GM12878 (cell line): ENCODE measurements at regions of chr3 and their contacts with region 1.

Region 1: GRCh38 chr3:46488735-46489361 is 8.9 kb upstream of the RTP3 start:
- DNase-seq: peak; percentile 56
- ATAC-seq: peak; percentile 99
- H3K4me3 ChIP-seq: no peak overlapping the region
- H3K27ac ChIP-seq: no peak overlapping the region
- H3K4me1 ChIP-seq: peaks cover 5% of the 10 kb centered on the region
- H3K27me3 ChIP-seq: peaks cover 0 to 2% of the 10 kb centered on the region in 2 experiments; a peak in 1 of 4 replicates
- CTCF ChIP-seq: peak; percentile 100; a peak in 5 of 6 replicates
- EP300 ChIP-seq: peak in 1 of 2 experiments; percentile 60; a peak in 1 of 4 replicates
- POLR2A ChIP-seq: no peak
- RAD21 ChIP-seq: peak; percentile 100

Region 2: GRCh38 chr3:45199837-45200648 is 1288.8 kb before region 1 on chr3:
- CTCF ChIA-PET with region 1: no interaction called
- POLR2A ChIA-PET with region 1: no interaction called
- RAD21 ChIA-PET with region 1: no interaction called
- SMC1A ChIA-PET with region 1: no interaction called
- in situ Hi-C with region 1: no loop called
- intact Hi-C with region 1: no loop called
- DNase-seq: no peak
- ATAC-seq: no peak
- H3K4me3 ChIP-seq: no peak overlapping the region
- H3K27ac ChIP-seq: no peak overlapping the region
- H3K4me1 ChIP-seq: no peaks in the 10 kb centered on the region
- H3K27me3 ChIP-seq: peaks cover 0 to 2% of the 10 kb centered on the region in 2 experiments; a peak in 3 of 4 replicates
- CTCF ChIP-seq: no peak
- EP300 ChIP-seq: no peak
- POLR2A ChIP-seq: no peak
- RAD21 ChIP-seq: no peak

Region 3: GRCh38 chr3:46146548-46146947 is 342.3 kb before region 1 on chr3:
- CTCF ChIA-PET with region 1: no interaction called
- POLR2A ChIA-PET with region 1: no interaction called
- RAD21 ChIA-PET with region 1: no interaction called
- SMC1A ChIA-PET with region 1: no interaction called
- in situ Hi-C with region 1: no loop called
- intact Hi-C with region 1: no loop called
- DNase-seq: no peak
- ATAC-seq: no peak
- H3K4me3 ChIP-seq: no peak overlapping the region
- H3K27ac ChIP-seq: no peak overlapping the region
- H3K4me1 ChIP-seq: no peaks in the 10 kb centered on the region
- H3K27me3 ChIP-seq: no peaks in the 10 kb centered on the region
- CTCF ChIP-seq: no peak
- EP300 ChIP-seq: no peak
- POLR2A ChIP-seq: no peak
- RAD21 ChIP-seq: no peak

Region 4: DNA sequence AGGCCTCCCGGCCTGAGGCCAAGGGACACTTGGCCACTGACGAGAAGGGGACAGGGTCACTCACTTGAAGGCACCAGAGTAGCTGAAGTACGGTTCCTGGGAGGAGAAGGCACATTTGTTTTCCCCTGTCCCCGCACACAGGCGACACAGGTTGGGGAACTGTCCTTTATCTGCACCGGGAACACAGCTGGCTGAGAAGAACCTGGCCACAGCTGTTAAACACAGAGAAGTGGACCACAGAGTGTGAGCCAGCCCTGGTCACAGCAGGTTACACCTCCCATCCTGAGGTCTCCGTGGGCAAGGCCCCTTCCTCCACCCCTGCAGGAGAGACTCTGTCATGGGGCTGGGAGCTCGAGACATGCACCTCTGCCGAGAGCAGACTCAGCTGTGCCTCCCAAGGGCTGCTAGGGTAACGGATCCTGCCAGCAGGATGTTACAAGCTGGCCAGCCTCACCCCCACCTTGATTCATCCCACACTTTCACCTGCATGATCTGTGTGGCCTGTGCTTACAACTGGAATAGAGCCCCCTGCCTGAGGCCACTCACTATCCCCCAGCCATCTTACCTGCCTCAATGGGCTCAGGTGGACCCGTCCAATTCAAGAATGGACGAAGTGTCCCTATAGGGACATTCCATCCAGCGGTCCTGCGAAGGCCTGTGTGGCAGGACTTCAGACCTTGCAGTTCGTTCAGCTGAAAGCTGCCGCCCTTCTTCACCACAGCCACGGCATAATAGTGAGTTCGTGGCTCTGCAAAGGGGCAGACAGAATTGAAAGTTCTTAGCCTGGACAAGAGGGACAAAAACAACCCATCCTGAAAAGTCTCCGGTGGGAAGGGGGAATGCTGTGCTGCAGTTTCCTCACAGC is 33.4 kb before region 1 on chr3:
- CTCF ChIA-PET with region 1: interaction called, 10 read pairs
- POLR2A ChIA-PET with region 1: no interaction called
- RAD21 ChIA-PET with region 1: interaction called, 5 read pairs
- SMC1A ChIA-PET with region 1: no interaction called
- in situ Hi-C with region 1: no loop called
- intact Hi-C with region 1: no loop called
- DNase-seq: no peak
- ATAC-seq: no peak
- H3K4me3 ChIP-seq: no peak overlapping the region
- H3K27ac ChIP-seq: no peak overlapping the region
- H3K4me1 ChIP-seq: no peaks in the 10 kb centered on the region
- H3K27me3 ChIP-seq: peaks cover 1 to 4% of the 10 kb centered on the region in 2 experiments; a peak in 2 of 4 replicates
- CTCF ChIP-seq: no peak
- EP300 ChIP-seq: no peak
- POLR2A ChIP-seq: no peak
- RAD21 ChIP-seq: no peak

Region 5: DNA sequence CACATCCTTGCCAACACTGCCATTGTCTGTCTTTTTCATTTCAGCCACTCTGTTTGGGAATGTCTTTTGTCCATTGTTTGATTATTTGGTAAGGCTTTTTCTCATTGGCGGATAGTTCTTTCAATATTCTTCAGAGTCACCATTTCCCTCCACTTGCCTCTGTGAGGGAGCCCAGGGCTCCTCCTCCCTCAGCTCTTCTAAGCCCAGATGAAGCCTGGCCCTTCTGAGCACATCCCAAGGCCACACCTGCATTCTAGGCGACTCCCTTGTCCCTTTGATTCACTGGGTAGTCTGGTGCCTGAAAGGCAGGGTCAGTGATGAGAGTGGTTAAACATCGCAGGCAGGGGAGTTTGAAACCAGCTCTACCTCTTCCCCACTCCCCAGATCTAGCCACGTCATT is 11.7 kb before region 1 on chr3:
- CTCF ChIA-PET with region 1: interaction called, 19 read pairs
- POLR2A ChIA-PET with region 1: no interaction called
- RAD21 ChIA-PET with region 1: interaction called, 5 read pairs
- SMC1A ChIA-PET with region 1: interaction called, 10 read pairs
- in situ Hi-C with region 1: no loop called
- intact Hi-C with region 1: no loop called
- DNase-seq: no peak
- ATAC-seq: no peak
- H3K4me3 ChIP-seq: no peak overlapping the region
- H3K27ac ChIP-seq: no peak overlapping the region
- H3K4me1 ChIP-seq: no peaks in the 10 kb centered on the region
- H3K27me3 ChIP-seq: peaks cover 0 to 6% of the 10 kb centered on the region in 2 experiments; a peak in 2 of 4 replicates
- CTCF ChIP-seq: no peak
- EP300 ChIP-seq: no peak
- POLR2A ChIP-seq: no peak
- RAD21 ChIP-seq: no peak

Region 6: DNA sequence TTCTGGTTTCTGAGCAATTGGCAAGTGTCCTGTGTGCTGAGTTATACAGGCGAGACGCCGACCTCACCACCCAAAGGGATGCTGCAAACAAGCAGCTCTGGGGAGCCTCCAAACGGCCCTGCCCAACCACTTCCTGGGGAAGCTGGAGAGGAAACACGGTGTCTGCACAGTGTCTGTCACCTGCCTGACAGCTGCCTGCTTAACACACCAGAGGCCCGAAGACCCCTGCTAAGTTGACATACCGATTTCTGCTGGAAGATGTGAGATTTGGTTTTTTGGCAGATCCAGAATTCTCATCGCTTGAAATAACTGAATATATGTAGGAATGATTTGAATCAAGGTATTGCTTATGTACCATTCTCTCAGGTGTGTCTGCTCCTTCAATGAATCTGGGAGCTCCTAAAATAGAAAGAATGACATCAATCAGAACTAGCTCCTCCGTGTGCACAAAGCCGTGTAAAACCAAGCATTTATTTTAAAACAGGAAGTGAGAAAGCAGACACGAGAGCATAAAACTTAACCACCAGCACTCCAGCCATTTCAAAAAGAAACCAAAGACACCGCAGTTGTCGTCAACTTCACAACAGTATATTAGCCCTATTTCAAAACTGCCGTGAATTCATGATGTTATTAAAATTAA is 50.1 kb after region 1 on chr3:
- CTCF ChIA-PET with region 1: interaction called, 25 read pairs
- POLR2A ChIA-PET with region 1: no interaction called
- RAD21 ChIA-PET with region 1: interaction called, 6 read pairs
- SMC1A ChIA-PET with region 1: interaction called, 12 read pairs
- in situ Hi-C with region 1: no loop called
- intact Hi-C with region 1: no loop called
- DNase-seq: peak; percentile 97
- ATAC-seq: peak; percentile 92
- H3K4me3 ChIP-seq: peak overlapping the region; percentile 57; the same call in 1 of the 2 replicates
- H3K27ac ChIP-seq: peak overlapping the region; percentile 90
- H3K4me1 ChIP-seq: peaks cover 39% of the 10 kb centered on the region
- H3K27me3 ChIP-seq: no peaks in the 10 kb centered on the region
- CTCF ChIP-seq: no peak
- EP300 ChIP-seq: peak; percentile 99
- POLR2A ChIP-seq: no peak
- RAD21 ChIP-seq: 0 out of 2 replicates have a peak, but pooled peaks have one; percentile 6

Region 7: DNA sequence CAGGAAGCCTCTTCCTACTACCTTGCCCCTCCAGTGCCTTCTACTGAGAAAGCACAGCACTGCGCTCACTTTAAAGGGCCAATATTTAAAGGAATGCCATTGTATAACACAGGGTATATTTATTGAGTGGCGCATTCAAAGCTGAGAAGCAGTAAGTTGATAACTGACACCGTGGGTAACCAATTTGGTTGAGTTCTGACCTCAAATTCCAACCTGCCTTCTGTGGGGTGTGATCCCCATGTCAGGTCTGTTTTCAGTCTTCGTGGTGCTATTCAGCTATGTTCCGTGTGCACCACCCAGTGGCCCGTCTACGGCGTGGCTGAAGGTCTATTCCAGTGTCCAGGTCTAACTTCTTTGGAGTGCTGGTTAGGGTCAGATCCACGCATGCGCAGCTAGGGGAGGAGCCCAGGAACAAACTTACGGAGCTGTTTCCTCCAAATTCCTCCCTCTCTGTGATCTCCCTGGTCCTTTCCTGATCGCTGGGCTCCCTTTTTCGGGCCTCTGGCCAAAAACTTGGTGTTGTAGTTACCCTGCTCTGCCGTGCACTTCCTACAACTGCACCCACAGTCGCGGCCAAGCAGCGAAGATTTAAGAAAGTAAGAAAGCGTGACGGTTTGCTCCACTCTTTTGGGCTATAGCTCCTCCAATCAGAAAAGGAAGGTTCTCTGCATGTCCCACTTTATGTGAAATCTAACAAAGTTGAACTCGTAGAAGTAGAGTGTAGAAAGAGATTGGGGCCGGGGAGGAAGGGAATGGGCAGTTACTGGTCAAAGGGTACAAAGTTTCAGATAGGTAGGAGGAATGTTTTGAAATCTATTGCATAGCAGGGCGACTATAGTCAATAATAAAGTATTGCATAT is 69.6 kb after region 1 on chr3:
- CTCF ChIA-PET with region 1: interaction called, 111 read pairs
- POLR2A ChIA-PET with region 1: interaction called, 3 read pairs
- RAD21 ChIA-PET with region 1: interaction called, 35 read pairs
- SMC1A ChIA-PET with region 1: interaction called, 23 read pairs
- in situ Hi-C with region 1: loop called (anchors 5 kb)
- intact Hi-C with region 1: loop called (anchors 1 kb)
- DNase-seq: peak; percentile 75
- ATAC-seq: peak; percentile 100
- H3K4me3 ChIP-seq: peak overlapping the region; percentile 66
- H3K27ac ChIP-seq: no peak overlapping the region
- H3K4me1 ChIP-seq: no peaks in the 10 kb centered on the region
- H3K27me3 ChIP-seq: no peaks in the 10 kb centered on the region
- CTCF ChIP-seq: peak; percentile 88 to 95 (median 88)
- EP300 ChIP-seq: no peak
- POLR2A ChIP-seq: no peak
- RAD21 ChIP-seq: peak; percentile 97

Region 8: DNA sequence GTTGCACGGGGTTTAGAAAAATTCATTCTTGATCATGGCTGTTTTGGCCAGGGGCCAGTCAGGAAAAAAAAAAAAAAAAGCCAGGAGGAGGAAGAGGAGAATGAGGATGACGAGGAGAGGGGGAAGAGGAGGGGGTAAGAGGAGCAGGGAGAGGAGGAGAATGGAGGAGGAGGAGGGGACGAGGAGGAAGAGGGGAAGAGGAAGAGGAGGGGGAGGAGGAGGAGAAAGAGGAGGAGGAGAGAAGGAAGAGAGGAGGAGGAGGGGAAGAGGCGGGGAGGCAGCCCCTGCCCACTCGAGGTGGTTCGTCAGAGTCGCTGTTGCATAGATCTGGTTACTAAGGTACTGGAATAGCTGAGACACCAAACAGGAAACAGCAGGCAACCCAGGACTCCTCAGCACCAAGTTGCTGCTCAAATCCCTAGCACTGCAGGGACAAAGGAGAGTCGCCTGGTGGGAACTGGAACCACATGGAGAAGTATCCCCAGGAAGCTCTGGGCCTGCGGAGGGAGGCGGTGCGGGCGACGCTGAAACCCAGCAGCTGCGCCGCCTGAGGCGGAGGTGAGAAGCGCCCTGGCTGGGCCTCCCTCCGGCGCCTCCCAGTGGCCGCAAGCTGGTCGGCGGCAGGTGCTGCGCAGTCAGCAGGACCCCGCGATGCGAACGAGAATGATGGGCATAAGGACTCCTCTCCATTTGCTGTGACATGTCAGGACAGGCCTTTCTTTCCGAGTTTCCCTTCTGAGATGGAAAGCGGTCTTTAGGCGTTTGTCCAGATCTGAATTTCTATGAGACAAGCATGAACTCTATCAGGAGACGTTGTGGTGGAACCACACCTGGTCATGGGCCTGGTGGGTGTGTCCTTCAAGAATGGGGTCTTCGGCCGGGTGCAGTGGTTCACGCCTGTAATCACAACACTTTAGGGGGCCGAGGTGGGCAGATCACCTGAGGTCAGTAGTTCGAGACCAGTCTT is 141.0 kb after region 1 on chr3:
- CTCF ChIA-PET with region 1: interaction called, 207 read pairs
- POLR2A ChIA-PET with region 1: no interaction called
- RAD21 ChIA-PET with region 1: interaction called, 66 read pairs
- SMC1A ChIA-PET with region 1: interaction called, 68 read pairs
- in situ Hi-C with region 1: loop called (anchors 5 kb)
- intact Hi-C with region 1: loop called (anchors 1 kb)
- DNase-seq: peak; percentile 19
- ATAC-seq: peak; percentile 100
- H3K4me3 ChIP-seq: no peak overlapping the region
- H3K27ac ChIP-seq: no peak overlapping the region
- H3K4me1 ChIP-seq: peaks cover 3% of the 10 kb centered on the region; the same call in 1 of the 2 replicates
- H3K27me3 ChIP-seq: no peaks in the 10 kb centered on the region
- CTCF ChIP-seq: peak; percentile 99 to 100 (median 99)
- EP300 ChIP-seq: no peak
- POLR2A ChIP-seq: no peak
- RAD21 ChIP-seq: peak; percentile 66

Region 9: DNA sequence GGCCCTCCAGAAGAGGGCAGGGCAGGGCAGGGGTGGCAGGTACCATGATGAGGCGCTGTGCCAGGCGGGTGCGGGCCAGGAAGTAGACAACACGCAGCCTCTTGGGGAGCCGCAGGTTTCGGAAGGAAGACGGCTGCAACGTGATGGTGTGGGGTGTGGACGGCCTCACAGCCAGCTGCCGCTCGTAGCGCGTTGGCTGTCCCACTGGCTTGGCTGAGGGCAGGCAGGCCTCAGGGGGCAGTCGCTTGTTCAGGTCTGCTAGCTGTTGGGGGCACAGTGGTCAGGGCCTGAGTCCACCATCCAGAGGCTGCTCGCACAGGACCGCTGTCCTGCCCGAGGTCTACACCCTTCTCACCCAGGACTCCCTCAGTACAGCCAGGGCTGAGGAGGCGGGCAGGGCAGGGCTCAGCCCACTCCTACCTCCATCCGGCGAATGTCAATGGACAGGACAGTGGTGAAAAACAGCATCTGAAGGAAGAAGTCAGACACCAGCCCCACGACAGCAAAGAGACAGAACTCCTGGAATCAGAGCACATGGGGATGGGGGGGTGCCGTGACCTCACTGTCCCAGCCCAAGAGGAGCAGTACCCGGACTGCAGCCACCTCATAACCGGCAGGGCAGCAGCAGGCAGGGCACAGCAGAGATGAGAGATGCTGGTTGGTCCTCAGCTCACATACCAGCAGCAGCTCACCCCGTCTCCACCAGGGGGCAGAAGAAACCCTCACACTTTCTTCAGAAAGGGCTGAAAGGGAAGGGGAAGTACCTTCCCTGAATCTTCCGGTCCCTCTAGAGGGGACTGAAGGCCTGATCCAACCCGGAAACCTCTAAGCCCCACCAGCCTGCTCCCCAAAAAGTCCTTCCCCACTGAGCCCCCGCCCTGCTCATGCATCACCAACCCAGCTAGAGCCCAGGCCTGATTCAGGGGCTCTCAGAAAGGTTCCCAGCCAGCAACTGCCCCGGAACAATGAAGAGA is 932.0 kb after region 1 on chr3:
- CTCF ChIA-PET with region 1: no interaction called
- POLR2A ChIA-PET with region 1: no interaction called
- RAD21 ChIA-PET with region 1: no interaction called
- SMC1A ChIA-PET with region 1: no interaction called
- in situ Hi-C with region 1: no loop called
- intact Hi-C with region 1: no loop called
- DNase-seq: peak; percentile 65
- ATAC-seq: peak; percentile 97
- H3K4me3 ChIP-seq: no peak overlapping the region
- H3K27ac ChIP-seq: peak overlapping the region; percentile 81
- H3K4me1 ChIP-seq: peaks cover 3% of the 10 kb centered on the region; the same call in 1 of the 2 replicates
- H3K27me3 ChIP-seq: no peaks in the 10 kb centered on the region
- CTCF ChIP-seq: peak; percentile 94 to 96 (median 96)
- EP300 ChIP-seq: no peak
- POLR2A ChIP-seq: no peak
- RAD21 ChIP-seq: peak; percentile 89